Activated B cell treated with CpG ODN at 0.5 μM for 24 hours (primary cell): ENCODE measurements at regions of chr7 and their contacts with region 1.

Region 1: DNA sequence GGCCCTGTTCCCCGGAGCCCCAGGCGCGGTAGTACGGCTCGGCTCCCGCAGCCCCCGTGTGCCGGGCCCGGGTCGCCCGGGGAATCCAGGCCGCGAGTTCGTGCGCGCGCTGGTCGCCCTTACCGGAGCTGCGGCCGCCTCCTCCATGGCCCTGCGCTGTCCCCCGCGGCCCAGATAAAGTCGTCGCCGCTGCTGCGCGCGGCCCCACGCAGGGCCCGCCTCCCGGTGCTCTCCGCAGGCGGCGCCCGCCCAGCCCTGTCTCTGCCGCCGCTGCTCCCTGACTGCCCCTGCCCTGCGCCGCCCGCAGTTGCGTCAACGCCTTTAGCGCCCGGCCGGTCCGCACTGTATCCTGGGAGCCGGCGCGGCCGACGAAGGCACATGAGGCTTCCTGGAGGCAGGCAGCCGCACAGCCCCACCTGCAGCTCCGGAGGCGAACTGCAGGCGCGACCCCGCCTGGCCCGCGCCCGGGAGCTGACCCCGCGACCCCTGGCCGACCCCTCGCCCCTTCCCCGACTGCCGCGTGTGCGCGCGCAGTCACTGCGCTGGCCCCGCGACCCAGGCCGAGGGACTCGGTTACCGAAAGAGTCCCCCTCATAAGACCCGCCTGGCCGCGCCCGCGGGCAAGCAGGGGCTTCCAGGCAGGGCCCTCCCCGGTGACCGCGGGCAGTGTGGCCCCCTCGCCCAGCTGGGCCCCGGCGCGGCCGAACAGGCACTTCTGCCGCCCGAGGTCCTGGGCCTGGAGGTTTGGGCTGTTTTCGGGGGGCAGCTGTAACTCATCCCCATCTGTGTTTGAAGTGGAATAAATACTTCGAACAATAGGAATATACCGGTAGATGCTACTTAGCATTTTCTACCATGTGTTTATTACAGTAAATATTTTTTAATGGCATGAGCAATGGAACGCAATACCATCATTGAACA is 127.1 kb upstream of the ZNF746 start:
- DNase-seq: peak; percentile 95
- ATAC-seq: peak; percentile 92
- H3K4me3 Mint-ChIP-seq: peak overlapping the region; percentile 90
- H3K27ac Mint-ChIP-seq: peak overlapping the region; percentile 80
- H3K4me1 Mint-ChIP-seq: peaks cover 43% of the 10 kb centered on the region
- H3K27me3 Mint-ChIP-seq: peaks cover 5% of the 10 kb centered on the region
- CTCF ChIP-seq: peak; percentile 87

Region 2: DNA sequence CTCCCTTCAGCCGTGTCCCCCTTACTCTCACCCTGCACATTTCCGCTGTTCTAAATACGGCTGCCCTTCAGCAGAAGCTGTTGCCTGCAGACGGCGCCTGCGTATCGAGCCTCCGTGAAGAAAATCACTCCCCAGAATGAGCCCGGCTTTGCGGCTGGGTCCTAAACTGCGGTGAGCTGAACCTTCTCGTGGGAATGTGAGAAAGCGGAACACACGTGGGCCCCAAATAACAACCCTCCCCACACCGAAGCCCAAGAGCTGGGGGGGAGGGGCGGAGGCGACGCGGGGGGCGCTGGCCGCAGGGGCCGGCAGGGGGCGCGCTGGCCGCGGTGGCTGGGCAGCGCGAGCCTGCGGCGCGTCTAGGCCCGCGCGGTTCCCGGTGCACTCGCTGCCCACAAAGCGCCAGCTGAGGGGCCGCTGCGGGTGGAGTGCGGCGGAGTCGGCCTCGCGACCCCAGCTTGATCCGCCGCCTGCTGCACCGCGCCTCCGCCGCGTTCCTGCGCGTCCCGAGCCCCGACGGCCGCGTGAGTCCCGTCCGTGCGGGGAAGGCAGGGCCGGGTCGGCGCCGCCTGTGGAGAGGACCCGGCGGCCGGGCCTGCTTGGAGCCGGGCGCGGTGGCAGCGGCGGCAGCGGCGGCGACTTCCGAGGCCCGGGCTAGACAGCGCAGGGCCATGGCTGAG is 477.5 kb before region 1 on chr7 and contains the start of gene ZNF398:
- CTCF ChIA-PET with region 1: no interaction called
- POLR2A ChIA-PET with region 1: no interaction called
- intact Hi-C with region 1: loop called (anchors 1 kb)
- DNase-seq: peak; percentile 87
- ATAC-seq: peak; percentile 84
- H3K4me3 Mint-ChIP-seq: peak within 1 kb of the TSS; percentile 91
- H3K27ac Mint-ChIP-seq: peak within 1 kb of the TSS; percentile 94
- H3K4me1 Mint-ChIP-seq: peaks cover 32% of the 10 kb centered on the region
- H3K27me3 Mint-ChIP-seq: no peaks in the 10 kb centered on the region
- CTCF ChIP-seq: no peak
- total RNA-seq, gene ZNF398: 15.1 and 17.3 TPM in 2 replicates

Region 3: GRCh38 chr7:149310113-149310836 is 314.4 kb before region 1 on chr7:
- CTCF ChIA-PET with region 1: interaction called, 9 read pairs
- POLR2A ChIA-PET with region 1: no interaction called
- intact Hi-C with region 1: loop called (anchors 10 kb)
- DNase-seq: no peak
- ATAC-seq: peak; percentile 49
- H3K4me3 Mint-ChIP-seq: no peak overlapping the region
- H3K27ac Mint-ChIP-seq: no peak overlapping the region
- H3K4me1 Mint-ChIP-seq: no peaks in the 10 kb centered on the region
- H3K27me3 Mint-ChIP-seq: peaks cover under 1% of the 10 kb centered on the region
- CTCF ChIP-seq: no peak

Region 4: DNA sequence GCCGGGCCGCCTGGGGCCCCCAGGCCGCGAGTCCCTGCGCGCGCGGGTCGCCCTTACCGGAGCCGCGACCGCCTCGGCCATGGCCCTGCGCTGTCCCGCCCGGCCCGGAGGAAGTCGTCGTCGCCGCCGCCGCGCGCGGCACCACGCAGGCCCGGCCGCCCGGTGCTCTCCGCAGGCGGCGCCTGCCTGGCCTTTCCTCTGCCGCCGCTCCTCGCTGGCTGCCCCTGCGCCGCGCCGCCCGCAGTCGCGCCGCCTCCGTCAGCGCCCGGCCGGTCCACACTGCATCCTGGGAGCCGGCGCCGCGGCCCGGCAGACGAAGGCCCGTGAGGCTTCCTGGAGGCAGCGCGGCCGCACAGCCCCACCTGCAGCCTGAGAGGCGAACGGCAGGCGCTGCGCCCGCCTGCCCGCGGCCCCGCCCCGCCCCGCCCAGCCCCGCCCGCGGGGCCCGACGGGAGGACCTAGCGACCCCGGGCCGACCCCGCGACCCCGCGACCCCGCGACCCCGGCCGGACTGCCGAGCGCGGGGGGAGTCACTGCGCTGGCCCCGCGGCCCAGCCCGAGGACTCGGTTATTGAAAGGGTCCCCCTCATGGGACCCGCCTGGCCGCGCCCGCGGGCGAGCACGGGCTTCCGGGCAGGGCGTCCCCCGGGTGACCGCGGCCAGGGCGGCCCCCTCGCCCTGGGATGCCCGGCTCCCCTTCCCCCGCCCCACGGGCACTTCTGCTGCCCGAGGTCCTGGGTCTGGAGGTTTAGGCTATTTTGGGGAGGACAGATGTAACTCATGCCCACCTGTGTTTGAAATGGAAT is 127.0 kb before region 1 on chr7 and contains the start of gene ZNF746:
- CTCF ChIA-PET with region 1: interaction called, 3 read pairs
- POLR2A ChIA-PET with region 1: no interaction called
- intact Hi-C with region 1: loop called (anchors 1 kb)
- DNase-seq: peak; percentile 79
- ATAC-seq: peak; percentile 96
- H3K4me3 Mint-ChIP-seq: peak within 1 kb of the TSS; percentile 92
- H3K27ac Mint-ChIP-seq: peak within 1 kb of the TSS; percentile 82
- H3K4me1 Mint-ChIP-seq: peaks cover 24% of the 10 kb centered on the region
- H3K27me3 Mint-ChIP-seq: peaks cover 2% of the 10 kb centered on the region
- CTCF ChIP-seq: no peak
- total RNA-seq, gene ZNF746: 21.0 and 28.4 TPM in 2 replicates

Region 5: DNA sequence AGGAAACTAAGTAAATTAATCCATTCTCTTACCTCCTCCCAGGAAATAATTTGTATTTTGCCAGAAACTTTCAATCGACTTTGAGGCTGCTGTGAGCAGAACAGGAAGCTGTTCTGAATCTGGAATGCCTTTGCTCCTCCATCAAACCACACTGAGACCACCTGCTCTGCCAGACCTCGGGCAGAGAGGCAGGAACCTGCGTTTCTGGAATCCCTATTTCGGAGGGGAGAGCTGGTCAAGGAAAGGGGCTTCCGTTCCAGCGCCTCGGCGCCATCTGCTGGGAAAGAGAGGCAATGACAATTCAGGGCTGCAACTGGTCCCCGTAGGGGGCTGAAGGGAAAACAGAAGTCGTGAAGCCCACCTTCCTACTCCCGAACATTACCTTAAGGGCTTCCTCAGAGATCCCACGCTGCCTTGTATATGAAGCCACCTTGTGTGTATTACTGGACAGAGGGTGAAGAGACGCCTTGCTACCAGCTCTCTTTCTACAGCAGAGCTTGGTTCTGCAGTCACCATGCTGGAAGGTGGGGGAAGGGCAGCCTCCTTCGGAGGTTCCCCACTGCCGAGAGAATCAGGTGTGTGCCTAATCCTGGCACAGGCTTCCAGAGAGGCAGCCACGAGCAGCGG is 117.5 kb after region 1 on chr7:
- CTCF ChIA-PET with region 1: no interaction called
- POLR2A ChIA-PET with region 1: no interaction called
- intact Hi-C with region 1: loop called (anchors 1 kb)
- DNase-seq: peak; percentile 58
- ATAC-seq: peak; percentile 89
- H3K4me3 Mint-ChIP-seq: peak overlapping the region; percentile 76
- H3K27ac Mint-ChIP-seq: no peak overlapping the region
- H3K4me1 Mint-ChIP-seq: peaks cover 10% of the 10 kb centered on the region
- H3K27me3 Mint-ChIP-seq: peaks cover 26% of the 10 kb centered on the region
- CTCF ChIP-seq: peak; percentile 64

Region 6: GRCh38 chr7:151080522-151081169 is 1456.0 kb after region 1 on chr7 and contains the start of gene FASTK:
- CTCF ChIA-PET with region 1: no interaction called
- POLR2A ChIA-PET with region 1: no interaction called
- intact Hi-C with region 1: loop called (anchors 10 kb)
- DNase-seq: peak; percentile 81
- ATAC-seq: peak; percentile 83
- H3K4me3 Mint-ChIP-seq: peak within 1 kb of the TSS; percentile 91
- H3K27ac Mint-ChIP-seq: peak within 1 kb of the TSS; percentile 70
- H3K4me1 Mint-ChIP-seq: peaks cover 49% of the 10 kb centered on the region
- H3K27me3 Mint-ChIP-seq: peaks cover 8% of the 10 kb centered on the region
- CTCF ChIP-seq: no peak
- total RNA-seq, gene FASTK: 97.6 and 103 TPM in 2 replicates